ENCODE measurements at regions of chr19 and their contacts with region 1.

Region 1: DNA sequence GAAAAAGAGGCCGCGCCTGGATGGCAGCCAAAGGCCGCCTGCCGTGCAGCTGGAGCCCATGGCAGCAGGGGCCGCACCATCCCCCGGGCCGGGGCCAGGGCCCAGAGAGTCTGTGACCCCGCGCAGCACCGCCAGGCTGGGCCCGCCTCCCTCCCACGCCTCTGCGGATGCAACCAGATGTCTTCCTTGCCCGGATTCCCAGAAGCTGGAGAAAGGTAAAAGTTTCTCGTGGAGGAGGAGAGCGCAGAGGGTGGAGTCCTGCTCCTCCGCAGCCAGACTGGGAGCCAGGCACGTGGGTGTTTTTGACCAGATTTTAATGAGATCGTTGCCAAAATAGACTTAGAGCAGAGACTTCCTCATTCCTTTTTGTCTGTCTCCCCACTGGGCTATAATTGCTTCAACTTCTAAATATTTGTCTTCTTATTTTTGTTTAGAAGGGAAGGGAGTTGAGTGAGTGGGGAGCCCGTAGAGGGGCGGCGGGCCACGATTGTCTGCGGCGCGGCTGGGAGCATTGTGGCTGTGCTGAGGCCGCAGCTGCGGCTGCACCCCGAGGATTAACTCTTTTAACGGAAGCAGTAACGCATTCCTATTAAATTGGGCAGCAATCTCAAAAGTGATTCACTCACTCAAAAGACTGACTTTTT is 22.8 kb upstream of the NDUFS7 start:
- DNase-seq: peak; percentile 87

Region 2: GRCh38 chr19:1315470-1316231 is 45.3 kb before region 1 on chr19:
- in situ Hi-C with region 1: loop called (anchors 10 kb)
- DNase-seq: peak; percentile 39

Measured in KBM-7 (cell line).